Activated T-helper 2 cell treated with anti-CD3 and anti-CD28 coated beads, Interferon-gamma antibody, Interleukin-2, Interleukin-4, amounts not matched to agents 10 μg/mL and 5 μg/mL and 100 μg/mL, durations not matched to agents 14 hours and 24 hours and 36 hours (primary cell): ENCODE measurements at regions of chr2 and their contacts with region 1.

Region 1: GRCh38 chr2:239401067-239401880 is 454 bp upstream of the HDAC4 start:
- DNase-seq: peak; percentile 98
- H3K4me3 Mint-ChIP-seq: peak overlapping the region; percentile 91
- H3K27ac Mint-ChIP-seq: peak overlapping the region; percentile 99
- H3K4me1 Mint-ChIP-seq: peaks cover 33% of the 10 kb centered on the region
- H3K27me3 Mint-ChIP-seq: peaks cover 9% of the 10 kb centered on the region

Region 2: GRCh38 chr2:239216614-239217273 is 184.5 kb before region 1 on chr2:
- intact Hi-C with region 1: loop called (anchors 1 kb)
- DNase-seq: peak; percentile 32
- H3K4me3 Mint-ChIP-seq: peak overlapping the region; percentile 65
- H3K27ac Mint-ChIP-seq: peak overlapping the region; percentile 88
- H3K4me1 Mint-ChIP-seq: peaks cover 53% of the 10 kb centered on the region
- H3K27me3 Mint-ChIP-seq: no peaks in the 10 kb centered on the region

Region 3: GRCh38 chr2:239275044-239275685 is 126.1 kb before region 1 on chr2:
- intact Hi-C with region 1: loop called (anchors 1 kb)
- DNase-seq: peak; percentile 81
- H3K4me3 Mint-ChIP-seq: peak overlapping the region; percentile 58
- H3K27ac Mint-ChIP-seq: peak overlapping the region; percentile 86
- H3K4me1 Mint-ChIP-seq: peaks cover 69% of the 10 kb centered on the region
- H3K27me3 Mint-ChIP-seq: peaks cover 2% of the 10 kb centered on the region

Region 4: DNA sequence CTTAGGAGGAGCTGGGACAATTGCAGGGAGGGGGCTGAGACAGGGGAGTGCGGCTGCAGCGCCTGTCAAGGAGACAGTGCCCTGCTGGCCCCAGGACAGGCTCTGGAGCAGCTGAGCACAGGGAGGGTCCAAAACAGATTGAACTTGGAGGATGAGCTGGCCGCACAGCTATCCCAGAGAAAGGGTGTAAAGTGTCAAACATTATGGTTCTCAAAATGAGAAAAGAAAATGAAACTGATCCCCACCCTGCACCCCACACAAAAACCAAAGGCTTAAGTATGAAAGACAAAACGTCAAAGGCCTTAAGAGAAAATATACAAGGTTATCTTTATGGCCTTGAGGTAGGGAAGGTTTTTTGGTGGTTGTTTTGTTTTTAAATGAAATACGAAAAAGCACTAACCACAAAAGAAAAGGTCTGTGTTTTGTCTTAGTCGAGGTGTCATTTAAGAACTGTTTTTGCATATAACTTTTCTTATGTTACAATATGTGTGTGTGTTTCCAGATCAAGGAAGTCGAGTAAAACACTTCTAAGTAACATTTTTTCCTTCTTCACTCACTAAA is 112.2 kb before region 1 on chr2:
- intact Hi-C with region 1: loop called (anchors 5 kb)
- DNase-seq: peak; percentile 48
- H3K4me3 Mint-ChIP-seq: peak overlapping the region; percentile 72
- H3K27ac Mint-ChIP-seq: peak overlapping the region; percentile 98
- H3K4me1 Mint-ChIP-seq: peaks cover 65% of the 10 kb centered on the region
- H3K27me3 Mint-ChIP-seq: no peaks in the 10 kb centered on the region

Region 5: GRCh38 chr2:239318790-239319661 is 82.2 kb before region 1 on chr2:
- intact Hi-C with region 1: loop called (anchors 1 kb)
- DNase-seq: no peak
- H3K4me3 Mint-ChIP-seq: peak overlapping the region; percentile 81
- H3K27ac Mint-ChIP-seq: peak overlapping the region; percentile 86
- H3K4me1 Mint-ChIP-seq: peaks cover 70% of the 10 kb centered on the region
- H3K27me3 Mint-ChIP-seq: no peaks in the 10 kb centered on the region

Region 6: DNA sequence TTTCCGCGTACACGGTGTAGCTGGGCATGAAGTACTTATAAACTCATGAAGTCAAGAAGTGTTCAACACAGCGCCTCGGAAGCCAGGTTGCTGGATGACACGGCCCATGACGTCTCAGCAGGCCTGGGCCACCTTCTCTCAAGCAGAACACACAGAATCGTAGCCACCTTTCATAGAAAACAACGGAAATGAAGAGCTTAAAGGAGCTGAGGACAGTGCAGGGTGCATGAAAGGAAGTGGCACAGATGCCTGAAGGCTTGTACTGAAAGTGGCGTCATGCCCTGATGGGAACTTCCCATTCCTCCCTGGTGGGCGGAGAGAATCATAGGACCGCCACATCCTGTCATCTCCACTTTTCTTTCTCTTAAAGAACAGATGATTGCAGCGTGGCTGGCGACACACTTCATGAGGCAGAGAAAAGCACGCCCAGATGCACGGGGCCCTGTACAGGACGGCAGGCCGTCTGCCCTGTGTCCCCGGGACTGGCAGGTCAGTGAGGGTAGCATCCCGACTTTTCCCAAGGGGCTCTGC is 31.6 kb before region 1 on chr2:
- intact Hi-C with region 1: loop called (anchors 5 kb)
- DNase-seq: peak; percentile 72
- H3K4me3 Mint-ChIP-seq: peak overlapping the region; percentile 78
- H3K27ac Mint-ChIP-seq: peak overlapping the region; percentile 95
- H3K4me1 Mint-ChIP-seq: peaks cover 11% of the 10 kb centered on the region
- H3K27me3 Mint-ChIP-seq: no peaks in the 10 kb centered on the region

Region 7: GRCh38 chr2:239544143-239544917 is 143.1 kb after region 1 on chr2:
- intact Hi-C with region 1: loop called (anchors 10 kb)
- DNase-seq: no peak
- H3K4me3 Mint-ChIP-seq: no peak overlapping the region
- H3K27ac Mint-ChIP-seq: peak overlapping the region; percentile 61
- H3K4me1 Mint-ChIP-seq: peaks cover 49% of the 10 kb centered on the region
- H3K27me3 Mint-ChIP-seq: peaks cover 8% of the 10 kb centered on the region

Region 8: DNA sequence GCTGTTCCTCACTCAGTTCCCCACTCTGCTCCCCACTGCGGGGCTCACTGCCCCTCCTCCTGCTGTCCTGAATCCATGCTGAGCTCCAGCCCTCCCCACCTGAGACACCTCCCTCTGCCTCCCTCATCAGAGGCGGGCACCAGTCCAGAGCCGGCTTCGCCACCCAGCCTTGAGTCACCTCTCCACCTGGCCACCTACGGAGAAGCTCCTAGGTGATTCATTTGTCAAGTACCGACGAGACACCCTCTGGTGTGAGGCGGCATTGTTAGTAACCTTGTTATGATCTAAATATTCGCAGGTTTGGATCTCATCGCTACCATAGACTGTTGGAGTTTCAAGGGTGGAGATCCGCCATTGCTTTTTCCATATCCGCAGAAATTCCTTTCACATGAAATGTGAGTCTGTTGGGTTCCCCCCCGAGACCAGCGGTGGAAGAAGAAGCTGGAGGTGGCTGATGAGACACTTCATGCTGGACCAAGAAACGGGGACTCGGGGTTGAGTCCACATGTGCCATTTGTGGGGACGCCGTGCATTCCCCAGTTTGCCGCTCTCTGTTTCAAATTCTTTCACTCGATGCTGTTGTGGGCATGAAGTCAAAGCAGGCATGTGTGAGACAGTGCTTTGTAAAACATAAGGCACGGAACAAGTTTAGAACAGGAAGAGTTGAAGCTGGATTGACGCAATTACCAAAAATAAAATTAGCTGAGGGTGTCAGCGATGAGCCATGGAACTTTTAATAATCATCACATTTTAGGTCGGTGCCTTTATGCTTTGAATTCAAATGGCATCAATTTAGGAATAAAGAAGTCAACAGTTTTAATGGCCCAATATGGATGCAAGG is 259.3 kb after region 1 on chr2:
- intact Hi-C with region 1: no loop called
- DNase-seq: no peak
- H3K4me3 Mint-ChIP-seq: no peak overlapping the region
- H3K27ac Mint-ChIP-seq: no peak overlapping the region
- H3K4me1 Mint-ChIP-seq: no peaks in the 10 kb centered on the region
- H3K27me3 Mint-ChIP-seq: peaks cover 26% of the 10 kb centered on the region